ENCODE measurements at regions of chr22 and their contacts with region 1.

Region 1: GRCh38 chr22:50507991-50508884 is at the start of gene NCAPH2:
- DNase-seq: peak; percentile 70 to 97
- H3K4me3 ChIP-seq: peak within 1 kb of the TSS; percentile 83 to 94
- H3K27ac ChIP-seq: peak within 1 kb of the TSS; percentile 80 to 97
- H3K4me1 ChIP-seq: peaks cover 10 to 20% of the 10 kb centered on the region in 2 donors
- H3K27me3 ChIP-seq: no peaks in the 10 kb centered on the region
- CTCF ChIP-seq: no peak
- total RNA-seq, gene NCAPH2: 41.7 TPM

Region 2: GRCh38 chr22:50200461-50201190 is 307.6 kb before region 1 on chr22 and contains the start of gene SELENOO:
- intact Hi-C with region 1: loop called (anchors 5 kb)
- DNase-seq: peak; percentile 66 to 93
- H3K4me3 ChIP-seq: peak within 1 kb of the TSS; percentile 76 to 88
- H3K27ac ChIP-seq: peak within 1 kb of the TSS; percentile 68 to 80
- H3K4me1 ChIP-seq: peaks cover 13 to 14% of the 10 kb centered on the region in 2 donors
- H3K27me3 ChIP-seq: no peaks in the 10 kb centered on the region
- CTCF ChIP-seq: no peak
- total RNA-seq, gene SELENOO: 41.7 TPM

Region 3: DNA sequence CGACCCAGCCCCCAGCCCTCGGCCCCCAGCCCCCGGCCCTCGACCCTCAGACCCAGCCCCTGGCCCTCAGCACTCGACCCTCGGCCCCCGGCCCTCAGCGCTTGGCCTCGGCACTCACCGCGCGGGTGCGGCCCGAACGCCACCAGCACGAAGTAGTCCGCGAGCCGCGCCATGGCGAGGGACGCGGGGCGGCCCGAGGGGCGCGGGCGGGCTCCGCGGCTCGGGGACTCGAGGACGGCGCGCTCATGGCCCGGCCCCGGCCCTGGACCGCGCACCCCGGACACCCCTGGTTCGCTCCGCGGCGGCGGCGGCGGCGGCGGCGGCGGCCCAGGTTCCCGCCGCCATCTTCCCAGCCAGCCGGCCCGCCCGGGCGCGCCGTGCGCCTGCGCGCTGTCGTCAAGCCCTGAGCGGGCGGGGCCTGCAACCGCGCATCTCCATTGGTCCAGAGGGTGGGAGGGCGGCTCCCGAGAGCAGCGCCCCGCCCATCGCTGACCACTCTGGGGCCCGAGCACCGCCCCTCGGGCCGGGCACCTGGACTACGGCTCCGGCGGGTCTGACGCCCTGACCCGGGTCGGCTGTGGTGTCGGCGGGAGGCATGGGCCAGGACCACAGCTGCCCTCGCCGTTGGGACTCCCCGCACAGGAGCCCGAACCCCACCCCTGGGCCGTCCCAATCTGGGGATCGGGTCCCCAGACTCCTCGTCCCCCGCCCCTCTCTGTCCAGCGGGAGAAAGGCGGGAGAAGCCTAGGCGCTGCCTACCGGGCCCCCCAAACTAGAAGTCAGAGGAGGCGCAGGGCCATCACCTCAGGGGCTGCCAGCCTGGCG is 33.4 kb before region 1 on chr22 and contains the start of gene SBF1:
- intact Hi-C with region 1: loop called (anchors 1 kb)
- DNase-seq: peak; percentile 62 to 94
- H3K4me3 ChIP-seq: peak within 1 kb of the TSS; percentile 92 to 97
- H3K27ac ChIP-seq: peak within 1 kb of the TSS; percentile 70 to 75
- H3K4me1 ChIP-seq: peaks cover 25 to 42% of the 10 kb centered on the region in 2 donors
- H3K27me3 ChIP-seq: no peaks in the 10 kb centered on the region
- CTCF ChIP-seq: no peak
- total RNA-seq, gene SBF1: 98.8 TPM

Region 4: GRCh38 chr22:50562523-50563412 is 54.5 kb after region 1 on chr22 and contains the start of gene SYCE3:
- intact Hi-C with region 1: loop called (anchors 5 kb)
- DNase-seq: peak; percentile 87 to 97
- H3K4me3 ChIP-seq: peak within 1 kb of the TSS; percentile 66 to 70
- H3K27ac ChIP-seq: no peak within 1 kb of the TSS
- H3K4me1 ChIP-seq: peaks cover 0 to 8% of the 10 kb centered on the region in 2 donors
- H3K27me3 ChIP-seq: no peaks in the 10 kb centered on the region
- CTCF ChIP-seq: peak; percentile 91 to 99 (median 98)
- total RNA-seq, gene SYCE3: not detected

Region 5: GRCh38 chr22:50627642-50628542 is 119.7 kb after region 1 on chr22 and contains the start of gene ARSA:
- intact Hi-C with region 1: loop called (anchors 1 kb)
- DNase-seq: peak; percentile 27 to 86
- H3K4me3 ChIP-seq: peak within 1 kb of the TSS; percentile 63 to 67
- H3K27ac ChIP-seq: peak within 1 kb of the TSS; percentile 46 to 84
- H3K4me1 ChIP-seq: peaks cover 4 to 12% of the 10 kb centered on the region in 2 donors
- H3K27me3 ChIP-seq: no peaks in the 10 kb centered on the region
- CTCF ChIP-seq: peak; percentile 1 to 47 (median 18)
- total RNA-seq, gene ARSA: 111 TPM